Endothelial cell of umbilical vein (primary cell): ENCODE measurements at regions of chr12 and their contacts with region 1.

Region 1: DNA sequence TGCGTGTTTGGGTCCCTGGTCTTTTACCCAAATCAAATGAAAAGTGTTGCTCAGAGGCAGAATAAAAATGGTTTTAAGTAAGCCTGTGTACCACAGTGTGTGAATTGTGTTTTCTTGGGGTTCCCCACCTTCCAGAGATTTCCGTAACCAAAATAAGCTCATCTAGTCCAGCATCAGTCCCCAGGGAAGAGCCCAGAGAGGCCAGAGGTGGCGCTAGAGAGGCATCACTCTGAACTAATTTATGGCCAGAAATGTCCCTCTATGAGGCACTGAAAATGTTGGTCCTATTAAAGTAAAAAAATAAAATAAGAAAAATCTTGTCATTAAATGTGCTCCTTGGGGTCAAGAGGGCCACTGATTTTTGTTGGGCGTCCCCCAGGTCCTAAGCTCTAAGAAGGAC is 24.9 kb upstream of the PRKAB1 start:
- DNase-seq: no peak
- H3K4me3 ChIP-seq: no peak overlapping the region
- H3K27ac ChIP-seq: no peak overlapping the region
- H3K4me1 ChIP-seq: no peaks in the 10 kb centered on the region
- H3K27me3 ChIP-seq: no peaks in the 10 kb centered on the region
- CTCF ChIP-seq: peak; percentile 26 to 32
- POLR2A ChIP-seq: no peak

Region 2: DNA sequence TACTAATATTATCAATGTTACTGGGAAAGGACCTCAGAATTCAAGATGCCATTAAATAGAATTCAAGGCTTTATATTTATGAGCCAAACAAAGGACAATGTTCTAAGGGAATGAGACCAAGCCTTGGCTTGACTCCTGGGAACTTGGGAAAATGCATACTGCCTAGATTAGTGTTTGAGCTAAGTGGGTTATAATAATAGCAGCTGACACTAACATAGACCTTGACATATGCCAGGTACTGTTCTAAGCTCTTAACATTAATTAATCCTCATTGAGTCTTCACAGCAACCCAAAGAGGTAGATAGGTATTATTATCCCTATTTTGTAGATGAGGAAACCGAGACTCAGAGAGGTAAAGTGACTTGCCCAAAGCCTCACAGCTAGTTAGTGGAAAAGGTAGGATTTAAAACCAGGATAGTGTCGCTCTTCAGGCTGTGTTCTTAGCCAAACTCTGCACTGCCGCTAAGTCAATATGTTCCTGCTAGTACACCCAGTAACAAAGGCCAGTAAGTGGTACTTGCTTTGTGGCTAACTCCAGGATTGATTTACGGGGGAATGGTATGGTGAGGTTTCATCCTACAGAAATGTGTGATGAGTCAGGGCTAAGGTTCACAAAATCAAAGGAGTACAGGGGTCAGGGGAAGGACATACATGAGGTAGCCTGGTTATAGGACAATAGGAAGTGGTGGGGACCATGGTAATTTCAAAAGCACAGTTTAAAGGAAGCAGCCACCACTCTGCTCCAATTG is 10.9 kb before region 1 on chr12:
- CTCF ChIA-PET with region 1: interaction called, 11 read pairs
- POLR2A ChIA-PET with region 1: no interaction called
- dilution Hi-C with region 1: no loop called
- intact Hi-C with region 1: no loop called
- DNase-seq: no peak
- H3K4me3 ChIP-seq: no peak overlapping the region
- H3K27ac ChIP-seq: no peak overlapping the region
- H3K4me1 ChIP-seq: no peaks in the 10 kb centered on the region
- H3K27me3 ChIP-seq: no peaks in the 10 kb centered on the region
- CTCF ChIP-seq: no peak
- POLR2A ChIP-seq: no peak

Region 3: DNA sequence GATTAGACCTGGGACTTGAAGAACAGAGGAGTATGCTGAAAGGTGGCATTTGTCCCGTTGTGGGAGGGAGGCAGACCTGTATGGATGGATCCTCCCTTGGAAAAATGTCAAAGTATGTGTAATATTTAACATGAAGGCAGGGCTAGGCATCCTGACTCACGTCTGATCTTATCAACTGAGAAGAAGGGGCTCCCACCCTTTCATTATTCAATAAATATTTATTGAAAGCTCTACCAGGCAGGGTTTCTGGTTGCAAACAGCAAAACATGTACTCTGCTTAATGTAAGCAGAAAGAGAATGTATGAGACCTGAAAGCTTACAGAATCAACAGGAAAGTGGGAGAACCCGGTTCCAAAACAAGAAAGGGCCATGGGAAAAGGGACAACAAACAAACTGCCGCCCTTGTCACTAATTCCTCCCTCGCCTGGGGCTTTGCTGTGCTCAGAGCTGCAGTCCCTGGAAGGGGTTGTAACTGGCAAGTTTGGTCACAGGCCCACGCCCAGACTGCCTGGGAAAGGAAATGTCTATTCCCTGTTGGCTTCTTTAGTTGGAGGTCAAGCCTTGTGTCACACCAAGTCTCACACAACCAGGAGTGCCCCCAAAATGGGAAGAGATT is 436.5 kb after region 1 on chr12:
- CTCF ChIA-PET with region 1: no interaction called
- POLR2A ChIA-PET with region 1: no interaction called
- dilution Hi-C with region 1: no loop called
- intact Hi-C with region 1: no loop called
- DNase-seq: no peak
- H3K4me3 ChIP-seq: no peak overlapping the region
- H3K27ac ChIP-seq: no peak overlapping the region
- H3K4me1 ChIP-seq: no peaks in the 10 kb centered on the region
- H3K27me3 ChIP-seq: peaks cover 0 to 3% of the 10 kb centered on the region in 2 experiments
- CTCF ChIP-seq: no peak
- POLR2A ChIP-seq: no peak